ENCODE measurements at regions of chr4 and their contacts with region 1.

Region 1: GRCh38 chr4:94390804-94391410 is 48.3 kb upstream of the HPGDS start:
- DNase-seq: no peak
- H3K4me3 Mint-ChIP-seq: no peak overlapping the region
- H3K27ac Mint-ChIP-seq: no peak overlapping the region
- H3K4me1 Mint-ChIP-seq: no peaks in the 10 kb centered on the region
- H3K27me3 Mint-ChIP-seq: peaks cover 8% of the 10 kb centered on the region

Region 2: GRCh38 chr4:94332983-94333590 is 57.8 kb before region 1 on chr4:
- intact Hi-C with region 1: loop called (anchors 1 kb)
- DNase-seq: no peak
- H3K4me3 Mint-ChIP-seq: no peak overlapping the region
- H3K27ac Mint-ChIP-seq: no peak overlapping the region
- H3K4me1 Mint-ChIP-seq: no peaks in the 10 kb centered on the region
- H3K27me3 Mint-ChIP-seq: peaks cover 3% of the 10 kb centered on the region

Region 3: GRCh38 chr4:94595879-94596483 is 205.1 kb after region 1 on chr4:
- intact Hi-C with region 1: no loop called
- DNase-seq: no peak
- H3K4me3 Mint-ChIP-seq: no peak overlapping the region
- H3K27ac Mint-ChIP-seq: no peak overlapping the region
- H3K4me1 Mint-ChIP-seq: no peaks in the 10 kb centered on the region
- H3K27me3 Mint-ChIP-seq: no peaks in the 10 kb centered on the region